ENCODE measurements at regions of chr4 and their contacts with region 1.

Region 1: GRCh38 chr4:2536193-2537010 is at the start of gene FAM193A:
- DNase-seq: peak; percentile 99
- H3K4me3 ChIP-seq: peak within 1 kb of the TSS; percentile 90 to 99 (median 95)
- H3K27ac ChIP-seq: peak within 1 kb of the TSS; percentile 92 to 96 (median 96)
- H3K4me1 ChIP-seq: peaks cover 31 to 49% (median 46%) of the 10 kb centered on the region in 4 donors
- H3K27me3 ChIP-seq: no peaks in the 10 kb centered on the region
- CTCF ChIP-seq: no peak
- EP300 ChIP-seq: no peak
- POLR2A ChIP-seq: peak; percentile 0
- total RNA-seq, gene FAM193A: 20.0 to 30.6 (median 24.6) TPM

Region 2: DNA sequence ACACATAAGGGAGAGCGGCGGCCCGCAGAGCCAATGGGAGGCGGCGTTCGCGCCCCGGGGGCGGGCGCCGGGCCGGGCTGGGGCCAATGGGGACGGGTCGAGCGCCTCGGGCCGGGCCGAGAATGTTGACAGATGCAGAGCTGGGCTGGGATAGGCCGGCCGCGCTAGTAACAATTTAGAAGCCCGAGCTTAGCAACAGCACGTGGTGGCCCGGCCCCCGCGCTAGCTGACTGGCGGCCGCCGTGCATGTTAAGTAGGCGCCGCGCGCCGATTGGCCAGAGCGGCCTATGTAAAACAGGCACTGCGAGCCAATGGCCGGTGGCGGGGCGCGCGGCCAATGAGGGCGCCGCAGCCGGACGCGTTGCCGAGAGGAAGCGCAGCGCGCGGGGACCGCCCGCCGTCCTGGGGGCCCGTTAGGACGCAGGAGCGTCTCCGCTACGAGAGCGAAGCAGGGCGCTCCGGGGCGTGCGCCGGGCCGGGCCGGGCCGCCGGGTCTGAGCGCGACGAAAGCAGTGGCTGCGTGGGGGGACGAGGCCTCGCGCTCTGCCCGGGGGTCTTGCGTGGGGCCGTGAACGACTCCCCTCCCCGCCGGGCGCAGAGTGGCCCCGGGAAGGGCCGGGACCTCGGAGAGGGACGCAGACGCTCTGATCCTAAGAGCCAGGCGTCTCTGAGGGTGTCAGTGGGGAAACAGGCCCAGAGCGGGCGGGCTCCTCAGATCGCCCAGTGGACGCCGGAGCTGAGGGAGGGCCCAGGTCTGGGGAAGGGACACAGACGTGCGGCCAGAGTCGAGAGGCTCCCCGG is 274.1 kb before region 1 on chr4:
- intact Hi-C with region 1: loop called (anchors 5 kb)
- DNase-seq: peak; percentile 100
- H3K4me3 ChIP-seq: peak overlapping the region; percentile 91 to 96 (median 93)
- H3K27ac ChIP-seq: peak overlapping the region; percentile 93 to 96 (median 95)
- H3K4me1 ChIP-seq: peaks cover 64 to 88% (median 77%) of the 10 kb centered on the region in 4 donors
- H3K27me3 ChIP-seq: no peaks in the 10 kb centered on the region
- CTCF ChIP-seq: no peak
- EP300 ChIP-seq: no peak
- POLR2A ChIP-seq: peak; percentile 95

Region 3: GRCh38 chr4:2468445-2469192 is 67.8 kb before region 1 on chr4 and contains the start of gene RNF4:
- intact Hi-C with region 1: loop called (anchors 5 kb)
- DNase-seq: peak; percentile 99
- H3K4me3 ChIP-seq: peak within 1 kb of the TSS; percentile 77 to 95 (median 88)
- H3K27ac ChIP-seq: peak within 1 kb of the TSS; percentile 87 to 97 (median 94)
- H3K4me1 ChIP-seq: peaks cover 22 to 56% (median 41%) of the 10 kb centered on the region in 4 donors
- H3K27me3 ChIP-seq: no peaks in the 10 kb centered on the region
- CTCF ChIP-seq: no peak
- EP300 ChIP-seq: no peak
- POLR2A ChIP-seq: no peak
- total RNA-seq, gene RNF4: 33.2 to 49.0 (median 40.7) TPM

Region 4: DNA sequence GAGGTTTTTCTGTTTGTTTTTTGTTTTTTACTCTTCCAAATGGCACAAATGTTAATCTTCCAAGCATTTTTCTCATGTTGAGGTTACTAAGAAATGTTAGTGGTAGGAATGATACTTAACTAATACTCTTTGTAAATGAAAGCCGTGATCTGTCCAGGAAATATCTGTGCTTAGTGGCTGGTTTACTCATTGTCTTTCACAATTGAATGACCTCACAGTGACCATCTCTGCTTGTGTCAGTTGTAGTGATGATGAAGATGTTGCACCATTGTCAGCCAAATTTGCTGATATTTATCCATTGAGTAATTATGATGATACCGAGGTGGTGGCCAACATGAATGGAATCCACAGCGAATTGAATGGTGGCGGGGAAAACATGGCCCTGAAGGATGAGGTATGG is 126.2 kb after region 1 on chr4:
- intact Hi-C with region 1: loop called (anchors 5 kb)
- DNase-seq: no peak
- H3K4me3 ChIP-seq: no peak overlapping the region
- H3K27ac ChIP-seq: peak overlapping the region; percentile 65 to 85 (median 80)
- H3K4me1 ChIP-seq: peaks cover 19 to 74% (median 60%) of the 10 kb centered on the region in 4 donors
- H3K27me3 ChIP-seq: no peaks in the 10 kb centered on the region
- CTCF ChIP-seq: no peak
- EP300 ChIP-seq: no peak
- POLR2A ChIP-seq: no peak

Measured in esophagus muscularis mucosa (tissue), 4 donors.